B cell (primary cell): ENCODE measurements at regions of chr9 and their contacts with region 1.

Region 1: DNA sequence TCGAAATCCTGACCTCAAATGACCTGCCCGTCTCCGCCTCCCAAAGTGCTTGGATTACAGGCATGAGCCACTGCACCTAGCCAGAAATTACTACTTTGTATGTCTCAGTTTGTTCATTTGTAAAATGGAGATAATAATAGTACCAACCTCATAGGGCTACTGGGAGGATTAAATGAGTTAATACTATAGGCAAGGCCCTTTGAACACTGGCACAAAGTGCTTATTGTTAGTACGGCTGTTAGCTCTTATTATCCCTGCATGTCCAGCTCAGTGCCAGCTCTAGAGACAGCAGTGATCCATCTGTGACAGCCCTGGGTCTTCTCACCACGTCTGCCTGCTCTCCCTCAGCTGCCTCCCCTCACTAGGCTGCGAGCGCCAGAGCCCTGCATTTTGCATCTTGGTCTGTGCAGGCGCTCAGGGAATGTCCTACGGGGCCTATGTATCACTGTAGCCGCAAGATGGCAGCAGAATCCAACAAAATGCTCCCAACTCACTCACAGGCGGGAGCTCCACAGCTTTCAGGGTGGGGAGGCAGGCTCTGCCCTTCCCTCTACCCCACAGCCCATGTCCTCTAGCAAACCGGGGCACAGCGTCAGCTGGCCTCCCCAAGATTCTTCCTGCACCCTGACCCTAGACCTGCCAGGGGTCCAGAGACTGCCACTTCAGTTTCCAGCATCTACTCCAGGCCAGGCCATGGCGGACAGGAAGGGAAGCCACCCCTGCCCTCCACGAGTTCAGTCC is 17.7 kb upstream of the AKNA start:
- DNase-seq: peak; percentile 89
- ATAC-seq: peak; percentile 99
- H3K4me3 ChIP-seq: no peak overlapping the region
- H3K4me3 Mint-ChIP-seq: no peak overlapping the region
- H3K27ac ChIP-seq: no peak overlapping the region
- H3K27ac Mint-ChIP-seq: peak overlapping the region; percentile 8
- H3K4me1 ChIP-seq: peaks cover 8 to 9% of the 10 kb centered on the region in 2 donors
- H3K4me1 Mint-ChIP-seq: peaks cover 4% of the 10 kb centered on the region
- H3K27me3 ChIP-seq: no peaks in the 10 kb centered on the region
- H3K27me3 Mint-ChIP-seq: no peaks in the 10 kb centered on the region
- CTCF ChIP-seq: peak; percentile 87

Region 2: GRCh38 chr9:113857875-113858274 is 547.6 kb before region 1 on chr9:
- CTCF ChIA-PET with region 1: no interaction called
- POLR2A ChIA-PET with region 1: no interaction called
- intact Hi-C with region 1: no loop called
- DNase-seq: no peak
- ATAC-seq: no peak
- H3K4me3 ChIP-seq: no peak overlapping the region
- H3K4me3 Mint-ChIP-seq: no peak overlapping the region
- H3K27ac ChIP-seq: no peak overlapping the region
- H3K27ac Mint-ChIP-seq: no peak overlapping the region
- H3K4me1 ChIP-seq: no peaks in the 10 kb centered on the region
- H3K4me1 Mint-ChIP-seq: no peaks in the 10 kb centered on the region
- H3K27me3 ChIP-seq: peaks cover 0 to 8% (median 1%) of the 10 kb centered on the region in 4 experiments
- H3K27me3 Mint-ChIP-seq: peaks cover 29% of the 10 kb centered on the region
- CTCF ChIP-seq: no peak

Region 3: DNA sequence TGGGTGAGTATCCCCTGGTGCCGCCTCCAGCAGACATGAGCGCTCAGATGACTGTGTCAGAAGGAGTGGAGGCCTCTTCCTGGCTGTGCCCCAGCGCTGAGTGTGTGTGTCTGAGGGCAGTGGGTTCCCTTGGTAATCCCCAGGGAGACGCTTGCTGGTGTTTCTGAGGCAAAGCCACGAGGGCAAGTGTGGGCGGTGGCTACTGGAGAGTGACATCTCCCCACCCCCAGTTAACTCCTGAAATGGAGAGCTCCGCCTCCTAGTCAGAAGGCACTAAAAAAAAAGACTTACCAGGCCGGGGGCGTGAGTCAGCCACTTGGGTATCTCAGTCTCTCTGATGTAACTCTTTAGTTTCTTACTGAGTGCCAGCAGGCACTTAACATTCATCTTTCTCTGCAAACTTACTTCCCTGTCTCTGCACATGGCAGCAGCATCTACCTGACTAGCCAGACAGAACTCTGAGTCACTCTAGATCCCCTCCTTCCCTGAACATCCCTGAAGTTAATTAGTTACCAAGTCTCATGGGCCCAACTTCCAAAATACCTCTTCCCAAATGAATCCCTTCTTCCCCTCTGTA is 56.5 kb before region 1 on chr9:
- CTCF ChIA-PET with region 1: interaction called, 91 read pairs
- POLR2A ChIA-PET with region 1: no interaction called
- intact Hi-C with region 1: no loop called
- DNase-seq: peak; percentile 91
- ATAC-seq: peak; percentile 94
- H3K4me3 ChIP-seq: no peak overlapping the region
- H3K4me3 Mint-ChIP-seq: peak overlapping the region; percentile 83
- H3K27ac ChIP-seq: peak overlapping the region; percentile 68 to 80
- H3K27ac Mint-ChIP-seq: peak overlapping the region; percentile 97
- H3K4me1 ChIP-seq: peaks cover 26 to 36% of the 10 kb centered on the region in 2 donors
- H3K4me1 Mint-ChIP-seq: peaks cover 44% of the 10 kb centered on the region
- H3K27me3 ChIP-seq: no peaks in the 10 kb centered on the region
- H3K27me3 Mint-ChIP-seq: no peaks in the 10 kb centered on the region
- CTCF ChIP-seq: no peak

Region 4: GRCh38 chr9:114452219-114453165 is 47.0 kb after region 1 on chr9:
- CTCF ChIA-PET with region 1: interaction called, 26 read pairs
- POLR2A ChIA-PET with region 1: no interaction called
- intact Hi-C with region 1: no loop called
- DNase-seq: peak; percentile 82
- ATAC-seq: peak; percentile 46
- H3K4me3 ChIP-seq: peak overlapping the region in 3 of 5 experiments; percentile 1 to 44 (median 6)
- H3K4me3 Mint-ChIP-seq: peak overlapping the region; percentile 80
- H3K27ac ChIP-seq: peak overlapping the region; percentile 87 to 92
- H3K27ac Mint-ChIP-seq: peak overlapping the region; percentile 97
- H3K4me1 ChIP-seq: peaks cover 57 to 58% of the 10 kb centered on the region in 2 donors
- H3K4me1 Mint-ChIP-seq: peaks cover 57% of the 10 kb centered on the region
- H3K27me3 ChIP-seq: no peaks in the 10 kb centered on the region
- H3K27me3 Mint-ChIP-seq: no peaks in the 10 kb centered on the region
- CTCF ChIP-seq: no peak

Region 5: GRCh38 chr9:114538241-114538640 is 132.8 kb after region 1 on chr9:
- CTCF ChIA-PET with region 1: interaction called, 18 read pairs
- POLR2A ChIA-PET with region 1: no interaction called
- intact Hi-C with region 1: no loop called
- DNase-seq: peak; percentile 74
- ATAC-seq: peak; percentile 99
- H3K4me3 ChIP-seq: no peak overlapping the region
- H3K4me3 Mint-ChIP-seq: no peak overlapping the region
- H3K27ac ChIP-seq: peak overlapping the region in 1 of 2 donors; percentile 0
- H3K27ac Mint-ChIP-seq: peak overlapping the region; percentile 38
- H3K4me1 ChIP-seq: peaks cover 8 to 13% of the 10 kb centered on the region in 2 donors
- H3K4me1 Mint-ChIP-seq: peaks cover 27% of the 10 kb centered on the region
- H3K27me3 ChIP-seq: no peaks in the 10 kb centered on the region
- H3K27me3 Mint-ChIP-seq: no peaks in the 10 kb centered on the region
- CTCF ChIP-seq: peak; percentile 68

Region 6: GRCh38 chr9:114681594-114682332 is 276.3 kb after region 1 on chr9 and contains the start of gene TEX48:
- CTCF ChIA-PET with region 1: interaction called, 23 read pairs
- POLR2A ChIA-PET with region 1: no interaction called
- intact Hi-C with region 1: no loop called
- DNase-seq: peak; percentile 75
- ATAC-seq: peak; percentile 89
- H3K4me3 ChIP-seq: no peak within 1 kb of the TSS
- H3K4me3 Mint-ChIP-seq: no peak within 1 kb of the TSS
- H3K27ac ChIP-seq: no peak within 1 kb of the TSS
- H3K27ac Mint-ChIP-seq: no peak within 1 kb of the TSS
- H3K4me1 ChIP-seq: peaks cover 0 to 4% of the 10 kb centered on the region in 2 donors
- H3K4me1 Mint-ChIP-seq: peaks cover 2% of the 10 kb centered on the region
- H3K27me3 ChIP-seq: peaks cover 0 to 15% (median 8%) of the 10 kb centered on the region in 4 experiments
- H3K27me3 Mint-ChIP-seq: peaks cover 39% of the 10 kb centered on the region
- CTCF ChIP-seq: peak; percentile 77
- total RNA-seq, gene TEX48: not detected in 2 replicates